CD4-positive, alpha-beta T cell (primary cell): ENCODE measurements at regions of chr11 and their contacts with region 1.

Region 1: DNA sequence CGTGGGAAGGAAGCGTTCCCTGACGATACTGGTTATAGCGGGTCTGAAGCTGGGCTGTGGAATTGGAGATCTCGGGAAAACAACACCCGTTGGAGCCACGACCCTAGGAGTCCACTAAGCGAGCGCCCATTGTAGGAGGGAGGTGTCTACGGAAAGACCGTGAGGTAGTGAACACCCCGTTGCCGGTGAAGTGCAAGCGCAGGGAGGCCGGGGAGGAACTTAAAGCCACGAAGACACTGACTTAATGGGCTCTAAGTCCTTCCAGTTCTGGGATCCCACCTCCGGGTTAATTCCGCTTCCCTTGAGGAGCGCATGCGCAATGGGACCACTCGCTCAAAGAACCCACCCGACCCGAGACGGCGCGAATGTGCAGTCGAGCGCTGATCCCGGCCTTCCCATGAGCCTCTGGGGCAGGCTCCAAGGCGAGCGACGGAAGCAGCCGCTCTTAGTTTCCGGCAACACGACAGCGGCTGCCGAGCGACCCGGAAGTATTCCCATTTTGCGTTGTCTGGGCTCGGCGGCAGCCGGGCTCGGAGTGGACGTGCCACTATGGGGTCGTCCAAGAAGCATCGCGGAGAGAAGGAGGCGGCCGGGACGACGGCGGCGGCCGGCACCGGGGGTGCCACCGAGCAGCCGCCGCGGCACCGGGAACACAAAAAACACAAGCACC is at the start of gene SART1:
- DNase-seq: peak; percentile 89 to 99 (median 94)
- ATAC-seq: peak; percentile 90
- H3K4me3 ChIP-seq: peak within 1 kb of the TSS; percentile 92
- H3K4me3 Mint-ChIP-seq: peak within 1 kb of the TSS; percentile 99
- H3K27ac ChIP-seq: peak within 1 kb of the TSS; percentile 93 to 95
- H3K27ac Mint-ChIP-seq: peak within 1 kb of the TSS; percentile 96
- H3K4me1 ChIP-seq: peaks cover 54% of the 10 kb centered on the region
- H3K4me1 Mint-ChIP-seq: peaks cover 55% of the 10 kb centered on the region
- H3K27me3 ChIP-seq: no peaks in the 10 kb centered on the region
- H3K27me3 Mint-ChIP-seq: no peaks in the 10 kb centered on the region
- CTCF ChIP-seq: no peak
- total RNA-seq, gene SART1: 78.6 to 80.2 TPM

Region 2: GRCh38 chr11:65652511-65653231 is 308.7 kb before region 1 on chr11:
- CTCF ChIA-PET with region 1: no interaction called
- POLR2A ChIA-PET with region 1: no interaction called
- intact Hi-C with region 1: no loop called
- DNase-seq: peak; percentile 92 to 99 (median 96)
- ATAC-seq: peak; percentile 75
- H3K4me3 ChIP-seq: peak overlapping the region; percentile 66
- H3K4me3 Mint-ChIP-seq: peak overlapping the region; percentile 88
- H3K27ac ChIP-seq: peak overlapping the region; percentile 95 to 99
- H3K27ac Mint-ChIP-seq: peak overlapping the region; percentile 97
- H3K4me1 ChIP-seq: peaks cover 60% of the 10 kb centered on the region
- H3K4me1 Mint-ChIP-seq: peaks cover 54% of the 10 kb centered on the region
- H3K27me3 ChIP-seq: no peaks in the 10 kb centered on the region
- H3K27me3 Mint-ChIP-seq: no peaks in the 10 kb centered on the region
- CTCF ChIP-seq: no peak

Region 3: GRCh38 chr11:65927904-65928397 is 33.4 kb before region 1 on chr11:
- CTCF ChIA-PET with region 1: no interaction called
- POLR2A ChIA-PET with region 1: interaction called, 12 read pairs
- intact Hi-C with region 1: loop called in 1 of 2 experiments (anchors 2 kb)
- DNase-seq: peak; percentile 59 to 93 (median 76)
- ATAC-seq: peak; percentile 96
- H3K4me3 ChIP-seq: peak overlapping the region; percentile 39
- H3K4me3 Mint-ChIP-seq: peak overlapping the region; percentile 77
- H3K27ac ChIP-seq: peak overlapping the region; percentile 78 to 81
- H3K27ac Mint-ChIP-seq: peak overlapping the region; percentile 95
- H3K4me1 ChIP-seq: peaks cover 26% of the 10 kb centered on the region
- H3K4me1 Mint-ChIP-seq: peaks cover 30% of the 10 kb centered on the region
- H3K27me3 ChIP-seq: no peaks in the 10 kb centered on the region
- H3K27me3 Mint-ChIP-seq: no peaks in the 10 kb centered on the region
- CTCF ChIP-seq: no peak